ENCODE measurements at regions of chr3 and their contacts with region 1.

Region 1: DNA sequence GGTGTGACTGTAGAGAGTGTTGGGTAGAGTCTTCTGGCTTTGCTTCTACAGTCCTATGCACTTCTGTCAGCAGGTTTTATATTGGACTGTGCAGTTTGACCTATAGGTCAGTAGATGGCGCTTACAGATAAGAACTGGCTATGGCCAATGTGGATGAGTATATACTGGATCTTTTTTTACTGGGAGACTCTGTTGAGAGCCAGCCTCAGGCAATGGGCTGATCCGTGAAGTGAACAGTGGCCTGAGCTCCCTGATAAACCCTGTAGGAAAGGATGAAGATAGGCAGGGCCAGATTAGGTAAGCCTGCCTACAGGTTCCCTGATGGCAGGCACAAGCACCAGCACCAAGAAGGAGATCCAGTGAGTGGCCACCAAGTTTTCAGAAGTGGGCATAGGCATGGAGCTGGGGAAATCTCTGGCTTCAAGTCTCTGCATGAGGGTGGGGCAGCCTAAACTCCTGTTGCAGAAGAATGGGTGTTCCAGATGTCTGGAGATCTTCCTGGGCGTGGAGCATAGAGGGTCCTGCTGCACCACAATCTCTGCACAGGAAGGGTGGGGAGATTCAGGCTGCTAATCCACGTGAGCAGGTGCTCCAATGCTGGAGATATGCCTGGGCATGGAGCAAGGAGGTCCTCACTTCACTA is 326.0 kb upstream of the SGO1 start:
- DNase-seq: peak in 2 of 10 donors; percentile 29 to 32

Region 2: DNA sequence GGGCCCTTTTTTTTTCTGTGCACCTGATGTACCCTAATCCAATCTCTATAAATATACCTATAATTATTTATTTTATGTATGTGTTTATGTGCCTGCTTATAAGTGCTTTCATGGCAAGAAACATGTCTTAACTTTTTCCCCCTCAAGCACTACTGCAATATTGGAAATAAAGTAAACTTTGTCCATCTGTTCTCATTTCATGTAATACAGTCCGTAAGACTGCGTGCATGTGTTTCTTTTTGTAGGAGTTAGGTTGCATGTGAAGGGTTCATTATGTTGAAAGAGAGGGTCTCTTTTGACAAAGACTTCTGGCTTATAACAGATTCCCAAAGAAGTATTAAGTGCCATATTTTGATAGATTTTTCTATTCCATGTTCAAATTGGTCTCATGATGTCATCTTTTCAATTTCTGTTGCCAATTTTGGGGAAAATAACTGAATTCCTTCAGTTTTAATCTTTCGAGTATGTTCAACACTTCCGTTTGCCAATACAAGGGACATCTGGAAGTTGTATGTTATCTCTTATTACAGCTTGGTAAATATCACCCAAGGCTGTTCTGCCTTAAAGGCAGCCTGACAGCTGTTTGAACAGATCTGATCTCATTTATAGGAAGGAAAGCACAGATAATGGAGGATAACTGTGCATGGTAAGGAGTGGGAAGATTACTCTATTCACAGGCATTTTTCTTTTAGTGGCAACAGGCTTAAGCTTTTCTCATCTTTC is 52.8 kb before region 1 on chr3:
- intact Hi-C with region 1: no loop called
- DNase-seq: no peak

Region 3: DNA sequence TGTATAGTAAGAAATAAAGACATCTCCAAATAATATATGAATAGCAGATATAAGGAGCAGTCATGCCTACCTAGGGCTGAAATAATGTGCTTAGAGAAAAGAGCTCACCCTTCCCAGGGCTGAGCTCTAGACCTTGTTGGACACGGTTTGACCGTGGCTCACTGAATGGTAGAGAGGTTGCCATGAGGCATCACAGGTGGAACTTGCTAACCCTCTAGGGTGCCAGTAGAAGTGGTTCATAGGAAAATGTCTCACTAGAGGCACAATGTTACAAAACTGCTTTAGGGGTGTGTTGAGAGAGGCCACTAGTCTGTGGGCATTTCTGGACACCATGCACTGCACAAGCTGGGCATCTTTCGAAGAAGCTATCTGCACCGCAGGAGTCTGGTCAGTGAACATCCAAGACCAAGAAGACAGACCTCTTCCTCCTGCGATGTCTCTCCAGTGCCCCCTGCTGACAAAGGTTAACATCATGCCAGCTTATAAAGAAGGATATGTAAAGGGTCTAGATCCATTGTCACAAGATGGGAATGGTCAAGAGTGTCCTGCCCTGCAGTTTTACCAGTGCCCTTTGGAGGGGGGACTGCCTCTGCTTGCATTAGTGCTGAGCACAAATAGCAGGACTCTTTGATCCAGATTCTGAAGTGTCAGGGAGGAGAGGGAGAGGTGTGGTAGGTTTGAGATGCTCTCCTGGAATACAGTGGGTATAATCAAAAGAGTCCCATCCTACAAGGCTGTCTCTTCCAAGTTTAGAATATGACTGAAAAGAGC is 972.3 kb after region 1 on chr3:
- intact Hi-C with region 1: loop called (anchors 2 kb)
- DNase-seq: peak in 8 of 10 donors; percentile 16 to 87 (median 49)

Measured in posterior cingulate gyrus (tissue), 11 donors.